Stomach (tissue), 19 donors: ENCODE measurements at regions of chr20 and their contacts with region 1.

Region 1: GRCh38 chr20:1313236-1313964 is 15.5 kb downstream of the SDCBP2 start:
- DNase-seq: peak; percentile 77 to 92
- H3K4me3 ChIP-seq: peak overlapping the region in 3 of 4 donors; percentile 20 to 34 (median 31)
- H3K27ac ChIP-seq: peak overlapping the region in 1 of 5 donors; percentile 6
- H3K4me1 ChIP-seq: peaks cover 4 to 13% (median 10%) of the 10 kb centered on the region in 4 donors
- H3K27me3 ChIP-seq: no peaks in the 10 kb centered on the region
- CTCF ChIP-seq: peak in 5 of 7 experiments; percentile 91 to 99 (median 95)
- EP300 ChIP-seq: no peak
- POLR2A ChIP-seq: no peak

Region 2: DNA sequence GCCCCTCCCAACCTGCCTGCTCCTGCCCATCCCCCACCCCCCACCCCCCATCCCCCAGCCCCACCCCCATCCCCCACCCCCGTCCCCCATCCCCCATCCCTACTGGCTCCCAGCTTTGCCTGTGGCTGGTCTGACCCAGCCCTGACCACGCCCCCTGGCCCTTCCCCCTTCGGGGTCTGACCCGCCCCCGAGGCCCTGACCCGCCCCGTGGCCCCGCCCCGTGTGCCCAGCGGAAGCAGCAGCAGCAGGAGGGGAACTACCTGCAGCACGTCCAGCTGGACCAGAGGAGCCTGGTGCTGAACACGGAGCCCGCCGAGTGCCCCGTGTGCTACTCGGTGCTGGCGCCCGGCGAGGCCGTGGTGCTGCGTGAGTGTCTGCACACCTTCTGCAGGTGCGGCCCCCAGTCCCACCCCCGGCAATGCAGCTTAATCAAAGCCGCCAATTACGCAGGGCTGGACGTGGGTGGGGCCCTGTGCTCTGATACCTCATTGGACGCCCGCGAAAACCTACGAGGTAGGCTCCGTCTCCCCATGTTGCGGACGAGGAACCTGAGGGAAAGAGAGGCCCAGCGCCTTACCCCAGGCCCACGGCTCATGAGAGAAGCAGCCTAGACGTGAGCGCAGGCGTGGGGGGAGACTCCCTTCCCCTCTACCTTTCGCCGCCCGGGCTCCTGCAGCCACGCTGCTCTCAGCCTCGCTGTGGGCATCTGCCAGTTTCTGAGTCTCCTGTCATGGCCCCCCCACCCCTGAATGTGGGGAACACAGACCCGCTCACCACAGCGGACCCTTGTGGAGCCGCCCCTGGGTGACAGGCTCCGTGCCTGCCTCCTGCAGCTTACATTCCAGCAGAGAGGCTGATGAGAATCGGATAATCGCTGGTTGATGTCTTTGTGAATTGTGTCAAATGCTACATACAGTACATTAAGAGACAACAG is 892.5 kb before region 1 on chr20:
- intact Hi-C with region 1: no loop called
- DNase-seq: peak; percentile 49 to 57
- H3K4me3 ChIP-seq: no peak overlapping the region
- H3K27ac ChIP-seq: no peak overlapping the region
- H3K4me1 ChIP-seq: no peaks in the 10 kb centered on the region
- H3K27me3 ChIP-seq: no peaks in the 10 kb centered on the region
- CTCF ChIP-seq: no peak
- EP300 ChIP-seq: no peak
- POLR2A ChIP-seq: no peak

Region 3: GRCh38 chr20:1392823-1393506 is 79.6 kb after region 1 on chr20 and contains the start of gene FKBP1A:
- intact Hi-C with region 1: loop called (anchors 5 kb)
- DNase-seq: peak; percentile 95 to 97
- H3K4me3 ChIP-seq: peak within 1 kb of the TSS; percentile 89 to 99 (median 90)
- H3K27ac ChIP-seq: peak within 1 kb of the TSS; percentile 88 to 94 (median 90)
- H3K4me1 ChIP-seq: peaks cover 48 to 55% (median 50%) of the 10 kb centered on the region in 4 donors
- H3K27me3 ChIP-seq: peaks cover 0 to 11% (median 0%) of the 10 kb centered on the region in 3 donors
- CTCF ChIP-seq: peak in 2 of 7 experiments; percentile 8 to 39
- EP300 ChIP-seq: no peak
- POLR2A ChIP-seq: peak in 1 of 4 donors; percentile 40
- total RNA-seq, gene FKBP1A: 33.0 to 280 (median 68.3) TPM

Region 4: GRCh38 chr20:1437235-1437904 is 124.0 kb after region 1 on chr20:
- intact Hi-C with region 1: loop called (anchors 5 kb)
- DNase-seq: peak; percentile 77 to 90
- H3K4me3 ChIP-seq: no peak overlapping the region
- H3K27ac ChIP-seq: no peak overlapping the region
- H3K4me1 ChIP-seq: peaks cover 0 to 13% (median 3%) of the 10 kb centered on the region in 4 donors
- H3K27me3 ChIP-seq: no peaks in the 10 kb centered on the region
- CTCF ChIP-seq: peak in 5 of 7 experiments; percentile 76 to 92 (median 79)
- EP300 ChIP-seq: no peak
- POLR2A ChIP-seq: no peak